GM12878 (cell line): ENCODE measurements at regions of chr9 and their contacts with region 1.

Region 1: DNA sequence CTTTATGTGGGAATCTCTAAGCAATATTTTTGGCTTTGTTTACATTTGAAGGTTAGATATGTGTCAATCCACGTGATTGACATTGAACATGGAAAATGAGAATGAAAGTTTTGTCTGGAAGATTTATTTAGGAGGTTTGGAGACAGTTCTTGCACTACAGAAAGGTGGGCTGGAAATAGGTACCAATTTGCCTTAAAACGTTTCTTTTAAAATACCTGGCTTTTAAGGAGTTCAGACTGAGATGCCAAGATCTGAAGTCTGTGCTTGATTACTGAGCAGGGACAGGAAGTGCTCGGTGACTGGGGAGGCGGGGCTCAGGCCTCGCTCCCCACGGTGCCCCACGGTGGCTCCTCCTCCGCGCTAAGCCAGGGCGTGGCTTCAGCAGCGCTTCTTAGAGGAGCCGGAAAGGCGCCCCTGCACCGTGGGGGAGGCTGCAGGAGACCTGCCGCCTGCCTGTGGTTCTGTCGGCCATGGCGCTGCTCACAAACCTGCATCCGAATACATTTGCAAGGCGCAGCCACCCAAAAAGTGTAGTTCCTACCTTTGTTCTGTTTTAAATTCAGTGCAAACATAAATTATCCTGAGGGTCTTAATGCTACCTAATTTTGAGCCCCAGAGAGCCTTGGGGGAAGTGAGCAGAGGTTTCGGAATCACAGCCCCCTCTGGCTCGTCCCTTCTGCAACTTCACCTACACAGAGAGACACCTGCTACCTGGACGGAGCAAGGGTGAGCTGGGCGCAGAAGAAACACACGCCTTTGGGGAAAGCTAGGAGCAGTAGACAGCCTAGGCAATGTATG is 49.2 kb downstream of the USP20 start:
- DNase-seq: peak; percentile 83
- ATAC-seq: peak; percentile 64
- H3K4me3 ChIP-seq: peak overlapping the region; percentile 74
- H3K27ac ChIP-seq: peak overlapping the region; percentile 96
- H3K4me1 ChIP-seq: peaks cover 50% of the 10 kb centered on the region
- H3K27me3 ChIP-seq: no peaks in the 10 kb centered on the region
- CTCF ChIP-seq: 0 out of 6 replicates have a peak, but pooled peaks of 1 of the 3 experiments have one; percentile 2
- EP300 ChIP-seq: no peak
- POLR2A ChIP-seq: peak; percentile 67; the same call in 1 of the 2 replicates
- RAD21 ChIP-seq: no peak

Region 2: DNA sequence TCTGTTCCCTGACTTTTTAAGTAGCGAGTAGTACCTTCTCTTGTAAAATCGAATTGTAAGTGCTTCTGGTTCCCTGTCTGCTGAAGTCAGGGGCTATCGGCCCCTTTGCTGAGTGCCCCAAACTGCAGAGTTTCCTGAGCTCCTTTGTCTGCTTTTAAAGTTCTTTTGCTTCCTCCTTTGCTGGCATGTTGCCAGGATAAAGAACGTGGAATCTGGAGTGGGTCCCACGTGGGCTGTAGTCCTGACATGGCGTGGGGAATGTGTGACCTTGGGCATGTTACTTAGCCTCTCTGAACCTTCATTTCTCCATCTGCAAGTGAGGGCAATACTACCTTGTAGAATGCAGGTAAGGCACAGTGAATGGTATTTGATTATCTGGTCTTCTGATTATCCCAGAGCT is 1442.3 kb before region 1 on chr9:
- CTCF ChIA-PET with region 1: no interaction called
- POLR2A ChIA-PET with region 1: no interaction called
- RAD21 ChIA-PET with region 1: no interaction called
- SMC1A ChIA-PET with region 1: no interaction called
- in situ Hi-C with region 1: no loop called
- intact Hi-C with region 1: no loop called
- DNase-seq: no peak
- ATAC-seq: no peak
- H3K4me3 ChIP-seq: no peak overlapping the region
- H3K27ac ChIP-seq: no peak overlapping the region
- H3K4me1 ChIP-seq: no peaks in the 10 kb centered on the region
- H3K27me3 ChIP-seq: no peaks in the 10 kb centered on the region
- CTCF ChIP-seq: no peak
- EP300 ChIP-seq: no peak
- POLR2A ChIP-seq: no peak
- RAD21 ChIP-seq: no peak

Region 3: GRCh38 chr9:129900263-129901027 is 16.0 kb after region 1 on chr9:
- CTCF ChIA-PET with region 1: interaction called, 8 read pairs
- POLR2A ChIA-PET with region 1: interaction called, 5 read pairs
- RAD21 ChIA-PET with region 1: interaction called, 8 read pairs
- SMC1A ChIA-PET with region 1: interaction called, 5 read pairs
- in situ Hi-C with region 1: no loop called
- intact Hi-C with region 1: loop called (anchors 1 kb)
- DNase-seq: peak; percentile 85
- ATAC-seq: peak; percentile 96
- H3K4me3 ChIP-seq: no peak overlapping the region
- H3K27ac ChIP-seq: peak overlapping the region; percentile 71
- H3K4me1 ChIP-seq: peaks cover 68% of the 10 kb centered on the region
- H3K27me3 ChIP-seq: no peaks in the 10 kb centered on the region
- CTCF ChIP-seq: no peak
- EP300 ChIP-seq: peak; percentile 78 to 94
- POLR2A ChIP-seq: peak; percentile 51; the same call in 1 of the 2 replicates
- RAD21 ChIP-seq: no peak

Region 4: GRCh38 chr9:129962889-129963703 is 78.7 kb after region 1 on chr9:
- CTCF ChIA-PET with region 1: interaction called, 4 read pairs
- POLR2A ChIA-PET with region 1: interaction called, 6 read pairs
- RAD21 ChIA-PET with region 1: interaction called, 6 read pairs
- SMC1A ChIA-PET with region 1: interaction called, 29 read pairs
- in situ Hi-C with region 1: no loop called
- intact Hi-C with region 1: no loop called
- DNase-seq: peak; percentile 59
- ATAC-seq: peak; percentile 96
- H3K4me3 ChIP-seq: peak overlapping the region; percentile 64
- H3K27ac ChIP-seq: peak overlapping the region; percentile 90
- H3K4me1 ChIP-seq: peaks cover 47% of the 10 kb centered on the region
- H3K27me3 ChIP-seq: no peaks in the 10 kb centered on the region
- CTCF ChIP-seq: no peak
- EP300 ChIP-seq: no peak
- POLR2A ChIP-seq: peak; percentile 58
- RAD21 ChIP-seq: no peak

Region 5: DNA sequence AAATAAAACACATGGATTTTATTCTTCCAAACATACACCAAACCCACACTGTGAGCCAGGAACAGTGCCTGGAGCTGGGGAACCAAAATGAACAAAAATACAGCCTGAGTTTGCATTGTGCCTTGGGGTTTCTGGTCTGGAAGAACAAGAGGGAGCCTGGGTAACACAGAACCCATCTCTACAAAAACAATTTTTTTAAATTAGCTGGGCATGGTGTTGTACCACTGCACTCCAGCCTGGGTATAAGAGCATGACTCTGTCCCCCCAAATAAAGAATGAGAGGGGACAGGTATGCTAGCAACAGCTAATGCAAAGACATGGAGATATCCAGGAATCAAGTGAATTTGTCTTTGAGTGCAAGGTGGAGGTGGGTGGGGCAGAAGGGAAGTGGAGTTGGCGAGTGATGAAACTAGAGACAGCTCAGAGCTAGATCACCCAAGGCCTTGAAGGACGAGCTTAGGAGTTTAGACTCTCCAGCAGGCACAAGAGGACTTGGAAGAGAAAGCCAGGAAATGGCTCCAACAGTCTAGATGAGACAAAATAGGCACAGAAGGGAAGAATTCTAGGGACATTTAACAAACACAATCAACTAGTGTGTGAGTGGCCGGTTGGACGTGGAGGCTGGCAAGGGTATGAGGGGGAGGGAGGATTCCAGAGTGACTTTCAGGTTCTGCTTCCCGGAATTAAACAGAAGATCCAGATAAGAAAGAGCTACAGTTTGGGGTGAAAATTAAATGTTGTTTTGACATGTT is 111.2 kb after region 1 on chr9:
- CTCF ChIA-PET with region 1: interaction called, 10 read pairs
- POLR2A ChIA-PET with region 1: interaction called, 79 read pairs
- RAD21 ChIA-PET with region 1: interaction called, 89 read pairs
- SMC1A ChIA-PET with region 1: interaction called, 42 read pairs
- in situ Hi-C with region 1: loop called (anchors 5 kb)
- intact Hi-C with region 1: no loop called
- DNase-seq: no peak
- ATAC-seq: peak; percentile 44
- H3K4me3 ChIP-seq: peak overlapping the region; percentile 37; the same call in 1 of the 2 replicates
- H3K27ac ChIP-seq: peak overlapping the region; percentile 100
- H3K4me1 ChIP-seq: peaks cover 77% of the 10 kb centered on the region
- H3K27me3 ChIP-seq: no peaks in the 10 kb centered on the region
- CTCF ChIP-seq: no peak
- EP300 ChIP-seq: no peak
- POLR2A ChIP-seq: peak; percentile 52
- RAD21 ChIP-seq: no peak

Region 6: DNA sequence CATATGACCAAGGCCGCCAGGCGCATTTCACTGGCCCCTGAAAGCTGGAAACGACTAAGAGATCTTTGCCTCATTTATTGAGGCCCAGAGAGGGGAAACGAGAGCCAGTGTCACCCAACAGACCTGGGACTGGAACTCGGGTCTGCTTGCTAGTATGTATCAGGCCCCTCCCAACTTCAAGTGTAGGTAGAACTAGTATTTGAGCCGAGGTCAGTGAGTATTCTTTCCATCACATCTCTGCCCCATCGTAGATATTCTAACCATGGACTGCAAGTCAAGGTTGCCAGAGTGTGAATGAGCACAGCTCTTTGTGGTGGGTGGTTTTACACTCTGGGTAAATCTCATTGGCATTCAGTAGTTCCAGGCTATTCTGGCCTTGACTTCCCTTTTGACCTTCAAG is 211.5 kb after region 1 on chr9:
- CTCF ChIA-PET with region 1: interaction called, 19 read pairs
- POLR2A ChIA-PET with region 1: no interaction called
- RAD21 ChIA-PET with region 1: interaction called, 18 read pairs
- SMC1A ChIA-PET with region 1: interaction called, 6 read pairs
- in situ Hi-C with region 1: no loop called
- intact Hi-C with region 1: loop called (anchors 5 kb)
- DNase-seq: peak; percentile 40
- ATAC-seq: peak; percentile 88
- H3K4me3 ChIP-seq: no peak overlapping the region
- H3K27ac ChIP-seq: peak overlapping the region; percentile 28
- H3K4me1 ChIP-seq: peaks cover 6% of the 10 kb centered on the region
- H3K27me3 ChIP-seq: no peaks in the 10 kb centered on the region
- CTCF ChIP-seq: no peak
- EP300 ChIP-seq: no peak
- POLR2A ChIP-seq: no peak
- RAD21 ChIP-seq: no peak